ENCODE measurements at regions of chr16 and their contacts with region 1.

Region 1: GRCh38 chr16:30984669-30985400 is at the start of gene HSD3B7:
- DNase-seq: peak; percentile 85
- ATAC-seq: peak; percentile 80
- H3K4me3 Mint-ChIP-seq: no peak within 1 kb of the TSS
- H3K27ac Mint-ChIP-seq: no peak within 1 kb of the TSS
- H3K4me1 Mint-ChIP-seq: no peaks in the 10 kb centered on the region
- H3K27me3 Mint-ChIP-seq: no peaks in the 10 kb centered on the region
- CTCF ChIP-seq: peak; percentile 95
- total RNA-seq, gene HSD3B7: 0.45 to 1.3 TPM

Region 2: GRCh38 chr16:30761928-30762810 is 222.7 kb before region 1 on chr16 and contains the starts of genes CFAP119 and RNF40:
- CTCF ChIA-PET with region 1: no interaction called
- POLR2A ChIA-PET with region 1: no interaction called
- intact Hi-C with region 1: no loop called
- DNase-seq: peak; percentile 97
- ATAC-seq: peak; percentile 97
- H3K4me3 Mint-ChIP-seq: peak within 1 kb of the TSS; percentile 93
- H3K27ac Mint-ChIP-seq: peak within 1 kb of the TSS; percentile 82
- H3K4me1 Mint-ChIP-seq: peaks cover 24% of the 10 kb centered on the region
- H3K27me3 Mint-ChIP-seq: no peaks in the 10 kb centered on the region
- CTCF ChIP-seq: no peak
- total RNA-seq, gene CFAP119: 3.8 to 3.9 TPM
- total RNA-seq, gene RNF40: 63.2 to 68.1 TPM

Region 3: DNA sequence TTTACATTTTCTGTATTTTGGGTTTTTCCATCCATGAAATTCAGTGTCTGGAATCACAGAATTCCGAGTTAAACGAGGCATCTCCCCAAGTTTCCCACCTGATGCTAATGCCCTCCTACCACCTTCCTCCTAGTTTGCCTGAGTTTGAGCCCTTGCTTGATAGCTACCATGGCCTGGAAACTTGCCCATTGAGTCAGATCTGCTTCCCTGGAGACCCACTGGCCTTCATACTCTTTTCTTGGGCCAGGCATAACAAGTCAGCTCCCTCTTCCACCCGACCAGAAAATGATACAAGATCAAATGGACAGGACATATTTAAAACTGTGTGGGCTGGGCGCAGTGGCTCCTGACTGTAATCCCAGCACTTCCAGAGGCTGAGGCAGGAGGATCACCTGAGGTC is 17.0 kb before region 1 on chr16:
- CTCF ChIA-PET with region 1: interaction called, 21 read pairs
- POLR2A ChIA-PET with region 1: interaction called, 6 read pairs
- intact Hi-C with region 1: no loop called
- DNase-seq: no peak
- ATAC-seq: no peak
- H3K4me3 Mint-ChIP-seq: no peak overlapping the region
- H3K27ac Mint-ChIP-seq: no peak overlapping the region
- H3K4me1 Mint-ChIP-seq: peaks cover 2% of the 10 kb centered on the region
- H3K27me3 Mint-ChIP-seq: no peaks in the 10 kb centered on the region
- CTCF ChIP-seq: no peak

Region 4: DNA sequence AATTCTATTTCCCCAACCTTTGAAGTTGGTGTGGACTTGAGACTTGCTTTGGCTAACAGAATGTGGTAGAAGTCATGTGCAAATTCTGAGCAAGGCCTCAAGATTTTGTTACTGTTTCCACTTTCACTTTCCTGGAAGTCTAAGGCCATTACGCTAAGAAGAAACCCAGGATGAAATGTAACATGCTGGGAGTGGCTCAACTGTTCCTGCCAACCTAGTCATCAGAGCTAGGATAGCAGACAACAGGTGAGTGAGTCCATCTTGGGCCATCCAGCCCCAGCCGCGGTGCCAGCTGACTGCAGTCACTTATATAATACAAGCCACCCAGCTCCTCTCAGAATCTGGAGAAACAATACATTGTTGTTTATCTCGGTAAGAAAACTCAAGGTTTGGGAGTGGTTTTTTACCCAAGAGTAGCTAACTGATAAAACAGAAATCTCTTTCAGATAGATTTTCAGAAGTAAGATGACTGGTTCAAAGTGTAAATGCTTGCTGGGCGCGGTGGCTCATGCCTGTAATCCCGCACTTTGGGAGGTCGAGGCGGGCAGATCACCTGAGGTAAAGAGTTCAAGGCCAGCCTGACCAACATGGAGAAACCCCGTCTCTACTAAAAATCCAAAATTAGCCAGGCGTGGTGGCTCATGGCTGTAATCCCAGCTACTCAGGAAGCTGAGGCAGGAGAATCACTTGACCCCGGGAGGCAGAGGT is 37.9 kb after region 1 on chr16:
- CTCF ChIA-PET with region 1: interaction called, 10 read pairs
- POLR2A ChIA-PET with region 1: no interaction called
- intact Hi-C with region 1: no loop called
- DNase-seq: no peak
- ATAC-seq: no peak
- H3K4me3 Mint-ChIP-seq: no peak overlapping the region
- H3K27ac Mint-ChIP-seq: peak overlapping the region; percentile 3
- H3K4me1 Mint-ChIP-seq: peaks cover 5% of the 10 kb centered on the region
- H3K27me3 Mint-ChIP-seq: no peaks in the 10 kb centered on the region
- CTCF ChIP-seq: no peak

Region 5: DNA sequence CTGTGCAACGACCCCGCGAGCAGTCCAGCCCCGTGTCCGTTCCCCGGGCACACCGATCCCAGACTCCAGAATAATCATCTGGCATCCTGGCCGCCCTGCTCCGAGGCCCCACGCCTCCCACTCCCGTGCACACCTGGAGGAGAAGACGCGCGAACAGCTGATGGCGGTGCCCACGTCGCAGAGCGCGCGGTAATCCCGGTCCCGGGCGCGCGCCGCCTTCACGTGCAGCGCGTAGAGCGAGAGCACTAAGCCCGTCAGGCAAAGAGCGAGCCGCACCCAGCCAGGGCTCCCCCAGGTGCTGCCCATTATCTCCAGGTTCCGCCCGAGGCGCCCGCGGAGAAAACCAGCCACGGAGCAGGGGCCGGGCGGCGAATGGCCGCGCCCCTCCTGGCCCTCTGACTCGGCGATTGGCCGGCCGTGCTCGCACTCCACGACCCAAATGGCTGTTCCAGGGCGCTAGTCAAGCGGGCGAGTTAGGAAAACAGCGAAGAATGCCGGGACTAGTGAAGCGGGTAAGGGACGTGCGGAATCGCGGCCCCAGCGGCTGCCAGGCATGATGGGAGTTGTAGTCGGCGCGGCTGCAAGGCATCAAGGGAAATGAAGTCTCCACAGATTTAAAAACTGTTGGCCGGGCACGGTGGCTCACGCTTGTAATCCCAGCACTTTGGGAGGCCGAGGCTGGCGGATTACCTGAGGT is 109.7 kb after region 1 on chr16 and contains the start of gene VKORC1:
- CTCF ChIA-PET with region 1: interaction called, 11 read pairs
- POLR2A ChIA-PET with region 1: no interaction called
- intact Hi-C with region 1: no loop called
- DNase-seq: peak; percentile 96
- ATAC-seq: peak; percentile 88
- H3K4me3 Mint-ChIP-seq: peak within 1 kb of the TSS; percentile 94
- H3K27ac Mint-ChIP-seq: peak within 1 kb of the TSS; percentile 90
- H3K4me1 Mint-ChIP-seq: peaks cover 22% of the 10 kb centered on the region
- H3K27me3 Mint-ChIP-seq: no peaks in the 10 kb centered on the region
- CTCF ChIP-seq: no peak
- total RNA-seq, gene VKORC1: 68.5 to 71.5 TPM

Measured in activated CD8-positive, alpha-beta T cell treated with anti-CD3 and anti-CD28 coated beads for 36 hours (primary cell).